ENCODE measurements at regions of chr5 and their contacts with region 1.

Region 1: DNA sequence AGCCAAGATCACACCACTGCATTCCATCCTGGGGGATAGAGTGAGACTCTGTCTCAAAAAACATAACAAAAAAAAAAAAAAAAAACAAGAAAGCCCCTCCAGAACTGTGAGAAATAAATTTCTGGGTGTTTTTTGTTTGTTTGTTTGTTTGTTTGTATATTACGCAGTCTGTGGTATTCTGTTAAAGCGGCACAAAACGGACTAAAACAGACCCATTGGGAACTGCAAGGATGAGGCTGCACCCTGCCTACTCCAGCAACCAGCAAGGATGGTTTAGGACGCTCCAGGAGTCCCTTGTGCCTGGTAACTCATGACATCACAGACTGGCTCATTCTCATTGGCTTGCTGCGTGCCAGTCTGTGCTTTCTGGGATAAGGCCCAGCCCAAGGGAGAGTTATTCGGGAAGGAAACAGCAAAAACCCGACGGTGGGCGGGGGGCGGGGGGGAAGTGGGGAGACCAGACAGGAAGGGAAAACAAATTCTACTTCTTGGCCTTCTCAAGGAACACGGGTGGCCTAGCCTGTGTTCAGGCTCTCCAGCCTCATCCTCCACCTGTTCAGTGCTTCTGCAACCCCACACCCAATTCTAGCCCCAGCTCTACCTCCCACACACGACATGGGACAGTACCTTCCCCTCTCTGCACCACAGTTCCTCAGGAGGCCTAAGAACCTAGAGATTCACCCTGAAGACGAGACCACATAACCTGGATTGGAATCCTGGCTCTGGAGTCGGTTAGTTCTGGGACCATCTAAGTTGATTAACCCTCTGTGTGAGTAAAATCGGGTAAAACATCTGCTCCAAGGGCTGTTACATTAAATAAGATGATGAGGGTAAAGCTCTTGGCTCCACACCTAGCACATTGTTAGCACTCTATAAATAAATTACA is 2.8 kb downstream of the CD74 start:
- DNase-seq: no peak
- ATAC-seq: no peak
- H3K4me3 Mint-ChIP-seq: peak overlapping the region; percentile 98
- H3K27ac Mint-ChIP-seq: peak overlapping the region; percentile 100
- H3K4me1 Mint-ChIP-seq: peaks cover 65% of the 10 kb centered on the region
- H3K27me3 Mint-ChIP-seq: peaks cover 2% of the 10 kb centered on the region
- CTCF ChIP-seq: no peak

Region 2: GRCh38 chr5:150398722-150399523 is 11.0 kb before region 1 on chr5:
- CTCF ChIA-PET with region 1: interaction called, 23 read pairs
- POLR2A ChIA-PET with region 1: interaction called, 2,478 read pairs
- intact Hi-C with region 1: loop called (anchors 1 kb)
- DNase-seq: peak; percentile 59
- ATAC-seq: peak; percentile 71
- H3K4me3 Mint-ChIP-seq: peak overlapping the region; percentile 28
- H3K27ac Mint-ChIP-seq: peak overlapping the region; percentile 80
- H3K4me1 Mint-ChIP-seq: peaks cover 50% of the 10 kb centered on the region
- H3K27me3 Mint-ChIP-seq: no peaks in the 10 kb centered on the region
- CTCF ChIP-seq: no peak

Region 3: DNA sequence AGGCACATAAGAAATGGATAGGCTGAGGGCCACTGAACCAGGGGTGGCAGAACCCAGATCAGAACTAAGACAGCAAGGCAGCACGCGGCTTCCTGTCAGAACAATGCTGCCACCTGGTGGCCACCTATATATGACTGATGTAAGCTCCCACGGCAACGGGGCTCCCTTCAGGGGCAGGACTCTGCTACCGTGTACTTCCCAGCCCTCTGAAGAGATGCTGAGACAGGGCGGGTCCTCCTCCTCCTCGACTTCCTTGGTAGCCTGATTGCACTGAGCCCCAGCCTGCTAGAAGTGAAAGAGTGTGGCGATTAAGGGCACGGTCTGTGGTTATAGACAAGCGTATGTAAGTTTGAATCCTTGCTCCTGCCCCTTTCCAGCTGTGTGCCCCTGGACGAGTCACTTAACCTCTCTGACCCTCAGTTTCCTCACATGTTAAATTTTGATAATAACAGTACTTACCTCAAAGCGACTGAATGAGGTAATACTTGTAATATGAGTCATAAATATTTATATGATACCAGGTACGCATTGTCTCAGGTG is 26.3 kb after region 1 on chr5:
- CTCF ChIA-PET with region 1: interaction called, 43 read pairs
- POLR2A ChIA-PET with region 1: interaction called, 2,478 read pairs
- intact Hi-C with region 1: loop called (anchors 1 kb)
- DNase-seq: peak; percentile 76
- ATAC-seq: peak; percentile 95
- H3K4me3 Mint-ChIP-seq: peak overlapping the region; percentile 50
- H3K27ac Mint-ChIP-seq: peak overlapping the region; percentile 92
- H3K4me1 Mint-ChIP-seq: peaks cover 47% of the 10 kb centered on the region
- H3K27me3 Mint-ChIP-seq: no peaks in the 10 kb centered on the region
- CTCF ChIP-seq: no peak

Region 4: GRCh38 chr5:150486402-150487198 is 76.7 kb after region 1 on chr5:
- CTCF ChIA-PET with region 1: no interaction called
- POLR2A ChIA-PET with region 1: interaction called, 12 read pairs
- intact Hi-C with region 1: no loop called
- DNase-seq: peak; percentile 76
- ATAC-seq: peak; percentile 38
- H3K4me3 Mint-ChIP-seq: peak overlapping the region; percentile 79
- H3K27ac Mint-ChIP-seq: peak overlapping the region; percentile 85
- H3K4me1 Mint-ChIP-seq: peaks cover 53% of the 10 kb centered on the region
- H3K27me3 Mint-ChIP-seq: no peaks in the 10 kb centered on the region
- CTCF ChIP-seq: no peak

Region 5: DNA sequence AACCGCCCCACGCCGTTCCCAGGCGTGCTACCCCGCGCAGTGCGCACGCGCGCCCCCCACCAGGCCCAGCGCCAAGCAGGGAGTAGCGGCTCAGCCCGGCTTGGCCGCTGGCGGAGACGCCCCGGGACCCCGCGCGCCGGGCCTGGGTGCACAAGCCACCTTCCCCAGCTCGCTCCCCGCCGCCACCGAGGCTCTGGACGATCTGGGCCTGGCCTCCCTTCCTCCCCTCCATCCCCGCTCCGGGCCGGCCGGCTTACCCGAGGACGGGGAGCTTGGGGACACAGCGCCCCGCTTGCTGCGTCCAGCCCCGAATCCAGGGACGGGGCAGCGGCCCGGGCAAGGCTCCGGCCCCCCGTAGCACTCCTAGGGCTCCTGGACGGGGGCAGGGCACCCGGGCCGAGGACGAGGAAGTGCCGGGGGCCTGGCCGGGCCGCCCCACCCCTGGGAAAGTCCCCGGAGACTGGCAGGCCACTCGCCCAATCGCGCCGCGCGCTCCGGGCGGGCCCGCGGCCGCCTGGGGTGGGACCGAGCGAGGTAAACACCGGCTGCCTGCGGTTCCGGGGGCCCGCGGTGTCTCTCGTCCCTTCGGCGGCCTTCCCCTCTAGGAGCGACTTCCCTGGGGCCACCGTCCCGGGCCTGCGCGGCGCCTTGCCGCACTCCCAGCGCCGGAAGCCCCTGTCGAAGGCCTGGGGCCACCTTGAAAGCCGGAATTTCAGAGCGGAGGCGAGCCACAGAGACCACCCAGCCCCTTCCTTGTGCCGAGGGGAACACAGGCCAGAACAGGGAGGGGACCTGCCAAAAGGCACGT is 670.9 kb after region 1 on chr5 and contains the start of gene TNIP1:
- CTCF ChIA-PET with region 1: no interaction called
- POLR2A ChIA-PET with region 1: interaction called, 23 read pairs
- intact Hi-C with region 1: no loop called
- DNase-seq: peak; percentile 99
- ATAC-seq: peak; percentile 81
- H3K4me3 Mint-ChIP-seq: peak within 1 kb of the TSS; percentile 93
- H3K27ac Mint-ChIP-seq: peak within 1 kb of the TSS; percentile 94
- H3K4me1 Mint-ChIP-seq: peaks cover 88% of the 10 kb centered on the region
- H3K27me3 Mint-ChIP-seq: no peaks in the 10 kb centered on the region
- CTCF ChIP-seq: no peak
- total RNA-seq, gene TNIP1: 506 and 512 TPM in 2 replicates

Region 6: DNA sequence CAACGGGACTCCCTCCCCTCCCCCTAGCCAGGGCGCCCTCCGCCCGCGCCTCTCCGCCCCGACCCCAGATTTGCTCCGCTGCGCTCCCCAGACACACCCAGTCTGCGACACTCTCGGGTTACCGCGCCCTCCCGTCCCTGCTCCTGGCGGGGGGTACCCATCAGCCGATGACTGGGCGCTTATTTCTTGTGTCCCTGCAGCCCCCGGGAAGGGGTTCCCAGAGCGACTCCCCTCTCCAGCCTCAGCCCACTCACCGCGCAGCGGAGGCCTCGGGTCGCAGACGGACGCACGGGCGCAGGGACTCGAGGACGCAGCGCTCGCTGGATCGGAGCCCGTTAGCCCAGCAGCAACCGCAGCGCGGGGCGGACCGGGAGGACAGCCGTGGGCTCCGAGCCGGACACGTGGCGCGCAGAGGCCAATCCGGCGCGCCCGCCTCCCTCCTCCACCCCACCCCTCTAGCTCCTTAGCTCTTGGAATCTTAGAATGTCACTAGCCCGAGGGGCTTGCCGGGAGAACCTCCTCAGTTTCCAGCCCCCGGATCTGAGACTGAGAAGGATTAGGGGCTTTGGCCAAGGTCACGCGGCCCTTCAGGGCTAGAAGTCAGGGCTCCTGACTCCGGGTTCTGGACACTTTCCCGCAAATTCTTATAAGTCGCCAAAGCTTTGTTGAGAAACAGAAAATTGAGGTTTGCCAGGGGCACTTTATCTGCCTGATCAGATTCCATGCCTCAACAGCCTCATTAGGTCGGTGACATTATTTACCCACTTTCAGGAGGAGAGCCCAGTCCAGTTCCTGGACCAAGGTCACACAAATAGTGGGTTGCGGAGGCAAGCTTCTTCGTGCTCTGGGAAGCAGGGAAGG is 747.8 kb after region 1 on chr5 and contains the start of gene ANXA6:
- CTCF ChIA-PET with region 1: no interaction called
- POLR2A ChIA-PET with region 1: no interaction called
- intact Hi-C with region 1: loop called (anchors 5 kb)
- DNase-seq: peak; percentile 62
- ATAC-seq: peak; percentile 72
- H3K4me3 Mint-ChIP-seq: peak within 1 kb of the TSS; percentile 91
- H3K27ac Mint-ChIP-seq: peak within 1 kb of the TSS; percentile 94
- H3K4me1 Mint-ChIP-seq: peaks cover 77% of the 10 kb centered on the region
- H3K27me3 Mint-ChIP-seq: no peaks in the 10 kb centered on the region
- CTCF ChIP-seq: no peak
- total RNA-seq, gene ANXA6: 367 and 379 TPM in 2 replicates